ENCODE measurements at regions of chr7 and their contacts with region 1.

Region 1: GRCh38 chr7:121752706-121753105 is 120.3 kb upstream of the PTPRZ1 start:
- DNase-seq: no peak
- ATAC-seq: no peak
- H3K4me3 ChIP-seq: no peak overlapping the region
- H3K27ac ChIP-seq: no peak overlapping the region
- H3K4me1 ChIP-seq: no peaks in the 10 kb centered on the region
- H3K27me3 ChIP-seq: no peaks in the 10 kb centered on the region
- CTCF ChIP-seq: no peak

Region 2: DNA sequence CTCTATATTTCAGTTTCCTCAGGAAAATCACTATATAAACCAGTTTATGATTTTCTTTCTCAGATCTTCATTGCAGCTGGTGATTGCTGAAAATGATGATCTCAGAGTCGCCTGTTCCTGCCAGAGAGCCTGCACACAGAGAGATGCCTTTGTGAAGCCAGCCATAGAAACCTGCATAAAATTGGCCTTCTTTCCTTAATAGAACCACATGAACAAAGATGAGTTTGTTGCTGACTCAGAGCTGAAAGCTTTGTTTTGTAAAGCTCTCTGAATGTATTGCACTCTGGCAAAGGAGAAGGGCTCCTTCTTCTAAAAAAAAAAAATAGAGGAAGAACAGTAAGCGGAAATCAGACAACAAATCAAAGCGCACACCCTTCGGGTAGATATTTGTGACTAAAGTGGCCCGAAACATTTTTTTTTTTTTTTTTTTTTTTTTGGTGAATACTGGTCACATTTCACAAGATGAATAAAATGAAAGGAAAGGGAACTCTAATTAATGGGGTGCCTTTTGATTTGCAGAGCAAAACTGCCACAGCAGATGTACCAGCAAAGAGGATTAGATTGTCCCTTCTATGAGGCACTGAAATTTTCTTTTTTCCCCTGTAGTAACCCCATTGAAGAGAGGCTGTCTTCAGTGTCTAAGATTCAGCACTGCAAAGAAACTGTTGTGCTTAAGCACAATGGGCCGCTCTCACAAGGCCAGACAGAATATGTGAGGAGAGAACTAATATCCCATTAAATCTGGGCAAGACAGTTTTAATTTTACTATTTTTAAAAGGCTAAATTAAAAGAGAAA is 45.1 kb after region 1 on chr7:
- intact Hi-C with region 1: no loop called
- DNase-seq: no peak
- ATAC-seq: no peak
- H3K4me3 ChIP-seq: no peak overlapping the region
- H3K27ac ChIP-seq: no peak overlapping the region
- H3K4me1 ChIP-seq: no peaks in the 10 kb centered on the region
- H3K27me3 ChIP-seq: no peaks in the 10 kb centered on the region
- CTCF ChIP-seq: no peak

Region 3: DNA sequence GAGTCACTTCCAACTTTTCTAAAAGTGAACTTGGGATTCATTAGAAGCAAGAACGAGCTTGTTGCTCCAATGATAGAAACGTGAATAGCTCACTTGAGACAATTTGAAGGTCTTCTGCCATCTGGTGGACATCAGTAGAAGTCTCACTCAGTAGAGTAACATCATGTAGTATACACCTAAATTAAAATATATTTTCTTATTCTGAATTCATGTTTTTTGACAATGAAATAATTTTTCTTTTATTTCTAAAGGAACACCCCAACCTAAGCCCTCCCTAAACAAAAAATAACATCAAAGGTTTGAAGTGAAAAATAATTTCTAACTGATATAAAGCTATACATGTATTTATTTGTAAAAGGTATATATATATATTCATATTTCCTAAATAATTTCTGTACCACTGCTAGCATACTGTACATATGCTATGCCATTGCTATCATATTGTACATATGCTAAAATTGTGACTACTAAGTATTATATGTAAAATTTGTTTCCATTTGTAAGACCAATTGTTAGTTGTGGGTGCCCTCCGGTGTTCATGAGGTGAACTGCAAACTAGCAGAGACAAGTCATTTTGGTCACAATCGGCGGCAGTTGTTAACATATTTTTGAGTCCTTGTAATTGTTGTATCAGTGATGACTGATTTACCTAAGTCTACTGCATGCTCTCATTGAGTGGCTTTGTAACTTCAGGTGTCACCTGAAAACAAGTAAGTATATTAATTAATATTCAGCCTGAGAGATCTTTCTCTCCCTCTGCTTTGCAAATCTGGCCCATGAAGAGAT is 242.1 kb after region 1 on chr7:
- intact Hi-C with region 1: loop called in 1 of 2 experiments (anchors 10 kb)
- DNase-seq: peak in 1 of 2 donors; percentile 15
- ATAC-seq: peak in 2 of 4 donors; percentile 57 to 77
- H3K4me3 ChIP-seq: no peak overlapping the region
- H3K27ac ChIP-seq: no peak overlapping the region
- H3K4me1 ChIP-seq: no peaks in the 10 kb centered on the region
- H3K27me3 ChIP-seq: no peaks in the 10 kb centered on the region
- CTCF ChIP-seq: no peak

Measured in psoas muscle (tissue), 8 donors.